A673 (cell line): ENCODE measurements at regions of chr14 and their contacts with region 1.

Region 1: DNA sequence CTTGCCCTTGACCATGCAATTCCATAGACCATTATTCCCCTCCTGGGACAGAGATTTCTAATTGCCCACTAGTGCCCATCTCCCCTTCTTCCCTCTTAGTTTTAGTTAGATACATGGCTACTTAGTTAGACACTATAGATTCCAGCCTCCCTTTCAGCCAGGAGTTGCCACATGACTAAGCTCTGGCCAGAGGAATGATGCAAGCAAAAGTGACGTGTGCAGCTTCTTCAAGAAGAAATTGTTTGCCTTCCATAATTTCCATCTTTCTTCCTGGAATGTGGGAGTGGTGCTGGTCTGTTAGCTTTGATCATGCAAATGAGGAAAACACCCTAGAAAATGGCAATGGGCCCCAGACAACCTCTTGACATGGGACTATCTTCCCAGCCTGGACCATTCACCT is 21.4 kb downstream of the CCDC177 start:
- DNase-seq: no peak
- H3K4me3 ChIP-seq: no peak overlapping the region
- H3K27ac ChIP-seq: no peak overlapping the region
- H3K4me1 ChIP-seq: peaks cover 2% of the 10 kb centered on the region
- H3K27me3 ChIP-seq: no peaks in the 10 kb centered on the region
- CTCF ChIP-seq: no peak

Region 2: GRCh38 chr14:69501423-69501838 is 51.8 kb before region 1 on chr14:
- CTCF ChIA-PET with region 1: interaction called, 10 read pairs
- POLR2A ChIA-PET with region 1: no interaction called
- intact Hi-C with region 1: no loop called
- DNase-seq: peak; percentile 48
- H3K4me3 ChIP-seq: no peak overlapping the region
- H3K27ac ChIP-seq: no peak overlapping the region
- H3K4me1 ChIP-seq: peaks cover 7% of the 10 kb centered on the region
- H3K27me3 ChIP-seq: no peaks in the 10 kb centered on the region
- CTCF ChIP-seq: no peak

Region 3: GRCh38 chr14:69695322-69696203 is 142.3 kb after region 1 on chr14:
- CTCF ChIA-PET with region 1: no interaction called
- POLR2A ChIA-PET with region 1: no interaction called
- intact Hi-C with region 1: no loop called
- DNase-seq: no peak
- H3K4me3 ChIP-seq: no peak overlapping the region
- H3K27ac ChIP-seq: peak overlapping the region; percentile 25
- H3K4me1 ChIP-seq: peaks cover 30% of the 10 kb centered on the region
- H3K27me3 ChIP-seq: no peaks in the 10 kb centered on the region
- CTCF ChIP-seq: no peak